B cell (primary cell): ENCODE measurements at regions of chr11 and their contacts with region 1.

Region 1: DNA sequence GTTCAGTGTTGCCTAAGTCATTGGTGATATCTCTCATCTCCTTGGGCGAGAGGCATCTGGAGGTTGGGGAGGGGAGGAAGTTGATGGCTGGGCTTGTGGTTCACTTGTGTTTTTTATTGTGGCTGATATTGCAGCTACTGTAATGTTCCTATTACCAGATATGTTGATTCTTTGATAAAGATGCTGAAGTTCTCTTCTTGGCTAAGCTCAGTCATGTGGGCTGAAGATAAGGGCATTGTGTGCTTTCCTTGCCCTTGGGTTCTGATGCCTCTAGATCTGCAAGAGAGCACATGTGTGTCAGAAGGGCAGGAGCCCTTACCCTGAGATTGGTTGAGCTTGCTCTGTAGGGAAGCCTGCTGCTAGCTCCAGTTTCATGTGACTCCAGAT is 12.0 kb downstream of the STX3 start:
- DNase-seq: no peak
- ATAC-seq: no peak
- H3K4me3 ChIP-seq: no peak overlapping the region
- H3K4me3 Mint-ChIP-seq: no peak overlapping the region
- H3K27ac ChIP-seq: peak overlapping the region in 1 of 2 donors; percentile 42
- H3K27ac Mint-ChIP-seq: peak overlapping the region; percentile 69
- H3K4me1 ChIP-seq: peaks cover 17 to 29% of the 10 kb centered on the region in 2 donors
- H3K4me1 Mint-ChIP-seq: peaks cover 22% of the 10 kb centered on the region
- H3K27me3 ChIP-seq: no peaks in the 10 kb centered on the region
- H3K27me3 Mint-ChIP-seq: no peaks in the 10 kb centered on the region
- CTCF ChIP-seq: no peak

Region 2: GRCh38 chr11:59668950-59669610 is 98.1 kb before region 1 on chr11 and contains the start of gene PATL1:
- CTCF ChIA-PET with region 1: no interaction called
- POLR2A ChIA-PET with region 1: no interaction called
- intact Hi-C with region 1: no loop called
- DNase-seq: peak; percentile 100
- ATAC-seq: peak; percentile 89
- H3K4me3 ChIP-seq: peak within 1 kb of the TSS; percentile 81 to 96 (median 93)
- H3K4me3 Mint-ChIP-seq: peak within 1 kb of the TSS; percentile 98
- H3K27ac ChIP-seq: peak within 1 kb of the TSS; percentile 98 to 100
- H3K27ac Mint-ChIP-seq: peak within 1 kb of the TSS; percentile 100
- H3K4me1 ChIP-seq: peaks cover 20% of the 10 kb centered on the region in 2 donors
- H3K4me1 Mint-ChIP-seq: peaks cover 33% of the 10 kb centered on the region
- H3K27me3 ChIP-seq: no peaks in the 10 kb centered on the region
- H3K27me3 Mint-ChIP-seq: no peaks in the 10 kb centered on the region
- CTCF ChIP-seq: peak; percentile 0
- total RNA-seq, gene PATL1: 45.0 and 46.0 TPM in 2 replicates

Region 3: GRCh38 chr11:59778122-59778521 is 10.9 kb after region 1 on chr11:
- CTCF ChIA-PET with region 1: no interaction called
- POLR2A ChIA-PET with region 1: no interaction called
- intact Hi-C with region 1: no loop called
- DNase-seq: no peak
- ATAC-seq: no peak
- H3K4me3 ChIP-seq: no peak overlapping the region
- H3K4me3 Mint-ChIP-seq: no peak overlapping the region
- H3K27ac ChIP-seq: no peak overlapping the region
- H3K27ac Mint-ChIP-seq: no peak overlapping the region
- H3K4me1 ChIP-seq: peaks cover under 1 to 1% of the 10 kb centered on the region in 2 donors
- H3K4me1 Mint-ChIP-seq: peaks cover 2% of the 10 kb centered on the region
- H3K27me3 ChIP-seq: no peaks in the 10 kb centered on the region
- H3K27me3 Mint-ChIP-seq: no peaks in the 10 kb centered on the region
- CTCF ChIP-seq: no peak

Region 4: GRCh38 chr11:59802639-59803176 is 35.5 kb after region 1 on chr11:
- CTCF ChIA-PET with region 1: interaction called, 27 read pairs
- POLR2A ChIA-PET with region 1: no interaction called
- intact Hi-C with region 1: no loop called
- DNase-seq: peak; percentile 79
- ATAC-seq: peak; percentile 64
- H3K4me3 ChIP-seq: no peak overlapping the region
- H3K4me3 Mint-ChIP-seq: no peak overlapping the region
- H3K27ac ChIP-seq: no peak overlapping the region
- H3K27ac Mint-ChIP-seq: no peak overlapping the region
- H3K4me1 ChIP-seq: no peaks in the 10 kb centered on the region
- H3K4me1 Mint-ChIP-seq: no peaks in the 10 kb centered on the region
- H3K27me3 ChIP-seq: no peaks in the 10 kb centered on the region
- H3K27me3 Mint-ChIP-seq: no peaks in the 10 kb centered on the region
- CTCF ChIP-seq: peak; percentile 80